Thyroid gland (tissue), 4 donors: ENCODE measurements at regions of chr20 and their contacts with region 1.

Region 1: GRCh38 chr20:25178563-25179438 is 16.7 kb upstream of the ENTPD6 start:
- DNase-seq: peak; percentile 49 to 54
- H3K4me3 ChIP-seq: no peak overlapping the region
- H3K27ac ChIP-seq: peak overlapping the region; percentile 11 to 56 (median 30)
- H3K4me1 ChIP-seq: peaks cover 7 to 18% of the 10 kb centered on the region in 2 donors
- H3K27me3 ChIP-seq: no peaks in the 10 kb centered on the region
- CTCF ChIP-seq: peak; percentile 37 to 98 (median 87)
- POLR2A ChIP-seq: no peak

Region 2: DNA sequence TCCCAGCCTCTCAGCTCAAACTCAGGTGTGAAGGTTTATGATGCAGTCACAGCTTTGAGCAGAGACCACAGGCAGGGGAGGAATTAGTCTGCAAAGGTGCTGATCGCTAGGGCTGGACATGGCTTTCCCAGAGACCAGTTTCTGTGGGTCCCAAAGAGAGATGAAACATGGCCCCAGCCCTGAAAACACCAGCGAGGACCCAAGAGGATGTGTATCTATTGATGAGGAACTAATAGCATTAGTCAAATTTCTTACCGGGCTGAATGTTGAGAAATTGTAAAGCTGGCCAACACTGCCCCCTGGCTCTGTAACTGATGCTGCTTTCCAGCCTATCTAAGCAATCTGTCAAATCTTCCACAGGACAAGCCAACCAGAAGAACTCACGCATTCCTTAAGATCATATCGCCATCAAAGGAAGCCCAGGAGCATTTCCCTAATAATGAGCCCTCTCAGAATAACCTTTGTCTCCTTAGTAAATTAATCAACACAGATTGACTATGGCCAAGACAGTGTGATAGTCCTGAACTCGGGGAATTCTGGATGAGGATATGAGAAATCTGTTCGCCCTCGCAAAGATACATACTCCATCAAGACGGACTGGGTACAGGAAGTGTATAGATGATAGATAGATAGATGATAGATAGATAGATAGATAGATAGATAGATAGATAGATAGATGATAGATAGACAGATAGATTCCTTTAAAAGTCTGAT is 113.0 kb before region 1 on chr20:
- intact Hi-C with region 1: loop called (anchors 5 kb)
- DNase-seq: peak; percentile 75
- H3K4me3 ChIP-seq: no peak overlapping the region
- H3K27ac ChIP-seq: peak overlapping the region in 2 of 3 donors; percentile 42 to 51
- H3K4me1 ChIP-seq: peaks cover 0 to 15% of the 10 kb centered on the region in 2 donors
- H3K27me3 ChIP-seq: no peaks in the 10 kb centered on the region
- CTCF ChIP-seq: peak in 5 of 6 experiments; percentile 51 to 94 (median 86)
- POLR2A ChIP-seq: no peak

Region 3: DNA sequence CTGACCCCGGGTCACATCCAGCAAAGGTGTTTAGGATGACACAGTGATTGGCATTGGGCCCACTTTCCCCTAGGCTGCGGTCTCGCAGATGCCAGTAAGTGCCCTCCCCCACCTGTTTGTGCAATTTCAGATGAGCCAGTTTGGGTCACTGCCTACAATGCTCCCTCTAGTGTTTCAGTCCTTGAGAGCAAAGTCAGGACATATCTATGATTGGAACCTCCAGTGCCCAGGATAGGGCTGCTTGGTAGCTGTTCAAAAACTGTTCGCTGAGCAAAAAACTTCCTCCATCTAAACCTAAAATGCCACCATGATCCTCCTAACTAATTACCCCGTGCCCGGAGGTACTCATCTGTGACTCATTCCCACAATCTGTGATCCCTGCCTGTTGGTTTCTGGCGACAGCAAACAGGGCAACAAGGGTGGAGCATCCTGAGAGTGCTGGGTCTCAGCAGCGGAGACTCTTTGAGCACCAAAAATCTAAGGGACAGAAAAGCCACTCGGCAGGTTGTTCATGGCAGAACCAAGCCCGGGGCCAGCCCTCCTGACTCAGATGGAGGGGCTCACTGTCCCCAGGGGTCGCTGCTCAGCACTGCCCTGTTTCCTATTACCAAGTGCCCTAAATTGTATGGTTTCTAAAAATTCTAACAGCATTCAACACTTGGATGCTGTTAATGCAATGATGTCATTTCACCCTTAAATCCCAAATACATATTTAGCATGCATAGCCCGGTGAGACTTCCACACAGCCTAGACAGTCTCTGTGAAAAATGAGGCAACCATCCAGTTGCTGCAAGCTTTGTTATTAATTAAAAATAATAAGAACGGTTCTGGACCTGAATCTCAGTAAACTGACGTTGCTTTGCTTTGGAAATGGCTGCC is 101.8 kb before region 1 on chr20:
- intact Hi-C with region 1: loop called (anchors 5 kb)
- DNase-seq: peak in 1 of 2 donors; percentile 40
- H3K4me3 ChIP-seq: no peak overlapping the region
- H3K27ac ChIP-seq: no peak overlapping the region
- H3K4me1 ChIP-seq: peaks cover 11 to 17% of the 10 kb centered on the region in 2 donors
- H3K27me3 ChIP-seq: peaks cover 17% of the 10 kb centered on the region
- CTCF ChIP-seq: peak in 2 of 6 experiments; percentile 19 to 27
- POLR2A ChIP-seq: no peak

Region 4: DNA sequence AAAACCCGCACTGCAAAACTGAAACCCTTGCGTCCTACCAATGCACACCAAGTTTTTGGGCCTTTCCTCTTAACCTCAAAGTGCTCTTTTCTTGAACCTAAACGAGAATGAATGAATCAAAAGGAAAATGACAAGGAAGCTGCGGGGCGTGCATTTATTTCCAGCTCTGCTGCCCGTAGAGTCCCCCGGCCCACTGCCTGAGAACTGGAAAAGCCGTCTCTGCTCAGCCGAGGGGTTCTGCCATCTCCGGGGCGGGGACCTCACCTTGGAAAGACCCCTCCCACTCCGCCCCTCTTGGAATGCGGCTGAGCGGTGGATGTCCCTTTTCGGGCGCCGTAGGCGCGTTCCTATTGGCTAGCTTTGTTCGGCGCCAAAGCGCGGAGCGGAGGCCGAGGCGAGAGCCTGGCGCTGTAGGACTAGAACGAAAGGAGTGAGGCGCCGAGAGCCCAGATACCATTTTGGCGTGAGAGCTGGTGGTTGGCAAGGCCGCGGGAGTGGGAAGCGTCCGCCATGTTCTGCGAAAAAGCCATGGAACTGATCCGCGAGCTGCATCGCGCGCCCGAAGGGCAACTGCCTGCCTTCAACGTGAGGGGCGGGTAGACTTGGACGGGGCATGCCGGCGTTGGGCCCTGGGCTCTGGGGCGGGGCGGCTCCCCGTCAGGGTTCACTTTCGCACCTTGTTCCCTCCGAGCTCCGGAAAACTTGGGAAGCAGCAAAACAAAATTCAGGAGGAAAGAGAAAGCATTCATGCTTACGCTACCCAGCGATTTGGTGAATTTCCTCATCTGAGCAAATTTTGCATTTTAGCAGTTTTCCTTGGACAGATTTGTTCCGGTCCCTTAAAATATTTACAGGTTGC is 228.7 kb after region 1 on chr20 and contains the start of gene GINS1:
- intact Hi-C with region 1: no loop called
- DNase-seq: peak; percentile 81 to 87
- H3K4me3 ChIP-seq: peak within 1 kb of the TSS; percentile 20 to 59 (median 53)
- H3K27ac ChIP-seq: peak within 1 kb of the TSS in 2 of 3 donors; percentile 18 to 36
- H3K4me1 ChIP-seq: peaks cover 5 to 7% of the 10 kb centered on the region in 2 donors
- H3K27me3 ChIP-seq: no peaks in the 10 kb centered on the region
- CTCF ChIP-seq: no peak
- POLR2A ChIP-seq: no peak
- total RNA-seq, gene GINS1: 0.44 to 1.5 (median 0.89) TPM in 3 of 4 donors, not detected in the other